ENCODE measurements at regions of chr12 and their contacts with region 1.

Region 1: DNA sequence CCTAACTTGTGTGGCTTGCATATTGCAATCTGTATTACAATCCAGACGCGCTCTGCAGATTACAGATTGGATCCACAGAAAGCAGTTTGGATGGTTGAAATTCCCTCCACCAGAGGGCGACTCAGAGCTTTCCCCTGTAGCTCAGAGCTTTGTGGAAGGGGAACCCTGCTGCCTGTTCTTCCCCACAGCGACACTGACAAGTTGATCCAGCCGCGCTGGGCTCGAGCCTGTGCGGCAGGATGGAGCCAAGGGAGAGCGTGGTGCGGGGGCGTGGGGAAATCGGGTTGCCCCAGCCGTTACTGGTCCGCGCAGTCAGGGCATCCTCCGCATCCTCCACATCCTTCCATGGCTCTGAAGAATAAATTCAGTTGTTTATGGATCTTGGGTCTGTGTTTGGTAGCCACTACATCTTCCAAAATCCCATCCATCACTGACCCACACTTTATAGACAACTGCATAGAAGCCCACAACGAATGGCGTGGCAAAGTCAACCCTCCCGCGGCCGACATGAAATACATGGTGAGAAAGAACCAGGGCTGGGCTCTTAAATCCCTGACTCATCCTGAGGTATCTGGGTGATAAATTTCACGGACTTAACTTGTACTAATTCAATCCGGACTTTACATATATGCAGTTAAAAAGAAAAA is at the start of gene GLIPR1L1:
- DNase-seq: peak; percentile 16 to 45
- H3K4me3 ChIP-seq: peak within 1 kb of the TSS; percentile 16; the same call in 1 of the 2 replicates
- H3K27ac ChIP-seq: no peak within 1 kb of the TSS
- H3K4me1 ChIP-seq: peaks cover 3% of the 10 kb centered on the region; the same call in 1 of the 2 replicates
- H3K27me3 ChIP-seq: no peaks in the 10 kb centered on the region
- CTCF ChIP-seq: peak; percentile 77
- total RNA-seq, gene GLIPR1L1: not detected in 2 replicates

Region 2: DNA sequence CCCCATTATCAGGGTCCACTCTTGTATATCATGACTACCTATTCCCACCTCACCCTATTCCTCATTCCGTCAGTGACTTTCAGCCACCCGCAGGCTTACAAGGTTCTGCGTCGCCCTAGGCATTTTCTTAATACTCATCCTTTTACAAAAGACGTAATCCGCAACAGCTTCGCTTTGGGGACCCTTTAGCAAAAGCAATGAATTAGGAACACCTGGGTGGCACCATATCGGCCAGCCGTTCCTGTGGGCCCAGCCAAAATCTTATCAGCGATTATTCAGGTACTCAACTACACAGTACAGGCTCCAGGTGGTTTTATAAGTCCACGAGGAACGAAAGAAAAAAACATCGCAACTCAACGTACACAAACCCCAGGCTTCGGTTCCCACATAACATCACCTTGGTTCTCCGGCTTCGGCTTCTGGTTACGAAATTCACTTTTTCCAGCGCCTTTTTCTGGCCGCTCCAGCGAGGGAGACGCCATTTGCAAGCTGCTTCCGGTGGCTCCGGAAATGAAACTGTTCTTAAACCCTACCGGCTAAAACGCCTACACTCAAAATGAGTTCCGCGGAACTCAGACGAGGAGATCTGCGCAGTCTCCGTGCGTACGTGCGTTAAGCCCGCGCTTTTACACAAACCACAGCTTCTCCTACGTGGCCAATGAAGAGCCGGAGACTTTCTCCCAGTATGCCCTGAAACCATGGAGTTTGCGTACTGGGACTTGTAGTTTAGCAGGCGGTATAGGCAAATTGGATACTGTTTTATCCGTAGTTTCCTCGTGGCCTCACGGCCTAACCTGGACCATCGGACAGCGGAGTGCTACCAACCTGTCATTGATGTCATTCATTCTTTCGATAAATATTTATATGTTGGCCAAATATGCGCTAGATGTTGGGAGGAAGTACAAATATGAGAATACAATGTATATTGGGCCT is 176.9 kb after region 1 on chr12 and contains the start of gene KRR1:
- CTCF ChIA-PET with region 1: no interaction called
- POLR2A ChIA-PET with region 1: no interaction called
- intact Hi-C with region 1: loop called (anchors 5 kb)
- DNase-seq: peak; percentile 81 to 92
- H3K4me3 ChIP-seq: peak within 1 kb of the TSS; percentile 91
- H3K27ac ChIP-seq: peak within 1 kb of the TSS; percentile 59
- H3K4me1 ChIP-seq: peaks cover 24% of the 10 kb centered on the region
- H3K27me3 ChIP-seq: no peaks in the 10 kb centered on the region
- CTCF ChIP-seq: no peak
- total RNA-seq, gene KRR1: 41.6 and 45.9 TPM in 2 replicates